Activated B cell treated with CpG ODN at 0.5 μM for 24 hours (primary cell): ENCODE measurements at regions of chr2 and their contacts with region 1.

Region 1: DNA sequence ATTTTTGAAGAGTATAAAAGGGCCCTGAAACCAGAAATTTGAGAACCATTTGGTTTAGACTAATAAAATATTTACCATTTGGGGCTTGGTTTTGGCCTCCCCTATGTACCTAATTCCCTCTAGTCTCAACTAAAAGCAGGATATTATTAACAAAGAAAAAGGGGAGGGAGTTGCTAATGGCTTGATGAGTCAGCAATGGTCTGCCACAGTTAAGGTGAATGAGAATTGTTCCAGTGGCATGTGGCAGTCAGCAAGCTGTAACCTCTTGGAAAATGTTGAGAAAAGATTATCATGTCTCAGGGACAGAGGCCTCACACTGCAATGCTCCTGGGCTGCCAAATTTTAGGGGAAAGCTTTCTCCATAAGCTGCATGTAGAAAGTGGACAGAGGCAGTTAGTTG is 20.1 kb upstream of the SLC39A10 start:
- DNase-seq: no peak
- ATAC-seq: no peak
- H3K4me3 Mint-ChIP-seq: no peak overlapping the region
- H3K27ac Mint-ChIP-seq: no peak overlapping the region
- H3K4me1 Mint-ChIP-seq: peaks cover 18% of the 10 kb centered on the region
- H3K27me3 Mint-ChIP-seq: no peaks in the 10 kb centered on the region
- CTCF ChIP-seq: no peak

Region 2: DNA sequence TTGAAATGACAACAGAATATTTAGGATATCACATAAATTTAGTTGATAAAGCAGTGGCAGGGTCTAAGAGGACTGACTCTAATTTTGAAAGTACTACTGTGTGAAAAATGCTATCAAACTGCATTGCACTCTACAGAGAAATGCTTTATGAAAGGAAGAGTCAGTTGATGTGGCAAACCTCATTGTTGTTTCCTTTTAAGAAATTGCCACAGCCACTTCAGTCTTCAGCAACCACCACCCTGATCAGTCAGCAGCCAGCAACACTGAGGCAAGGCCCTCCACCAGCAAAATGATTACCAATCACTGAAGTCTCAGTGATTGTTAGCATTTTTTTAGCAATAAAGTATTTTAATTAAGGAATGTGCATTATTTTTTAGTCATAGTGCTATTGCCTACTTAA is 468.5 kb before region 1 on chr2:
- CTCF ChIA-PET with region 1: no interaction called
- POLR2A ChIA-PET with region 1: no interaction called
- intact Hi-C with region 1: no loop called
- DNase-seq: no peak
- ATAC-seq: no peak
- H3K4me3 Mint-ChIP-seq: no peak overlapping the region
- H3K27ac Mint-ChIP-seq: no peak overlapping the region
- H3K4me1 Mint-ChIP-seq: no peaks in the 10 kb centered on the region
- H3K27me3 Mint-ChIP-seq: no peaks in the 10 kb centered on the region
- CTCF ChIP-seq: no peak

Region 3: DNA sequence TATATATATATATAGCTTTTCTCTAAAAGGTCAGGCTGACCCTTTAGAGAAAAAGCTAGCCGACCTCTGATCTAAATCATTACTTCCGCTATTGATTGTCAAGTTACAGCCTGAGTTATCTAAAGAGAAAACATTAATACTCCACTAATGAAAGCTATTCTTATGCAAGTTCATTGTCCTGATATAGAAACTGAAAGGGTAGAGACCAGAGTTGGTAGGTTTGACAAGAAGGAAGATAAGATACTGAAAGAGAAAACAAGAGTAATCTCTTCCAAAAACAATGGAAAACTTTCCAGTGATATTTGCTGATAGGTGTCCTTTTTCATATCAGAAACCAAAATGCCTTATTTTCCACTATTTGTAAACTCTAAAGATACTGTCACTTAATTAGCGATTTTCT is 42.6 kb before region 1 on chr2:
- CTCF ChIA-PET with region 1: no interaction called
- POLR2A ChIA-PET with region 1: interaction called, 3 read pairs
- intact Hi-C with region 1: loop called (anchors 5 kb)
- DNase-seq: no peak
- ATAC-seq: no peak
- H3K4me3 Mint-ChIP-seq: no peak overlapping the region
- H3K27ac Mint-ChIP-seq: peak overlapping the region; percentile 9
- H3K4me1 Mint-ChIP-seq: peaks cover 29% of the 10 kb centered on the region
- H3K27me3 Mint-ChIP-seq: no peaks in the 10 kb centered on the region
- CTCF ChIP-seq: no peak

Region 4: GRCh38 chr2:195649629-195650190 is 12.8 kb after region 1 on chr2:
- CTCF ChIA-PET with region 1: interaction called, 3 read pairs
- POLR2A ChIA-PET with region 1: interaction called, 23 read pairs
- intact Hi-C with region 1: loop called (anchors 1 kb)
- DNase-seq: no peak
- ATAC-seq: peak; percentile 21
- H3K4me3 Mint-ChIP-seq: peak overlapping the region; percentile 76
- H3K27ac Mint-ChIP-seq: peak overlapping the region; percentile 99
- H3K4me1 Mint-ChIP-seq: peaks cover 76% of the 10 kb centered on the region
- H3K27me3 Mint-ChIP-seq: no peaks in the 10 kb centered on the region
- CTCF ChIP-seq: no peak